ENCODE measurements at regions of chr9 and their contacts with region 1.

Region 1: DNA sequence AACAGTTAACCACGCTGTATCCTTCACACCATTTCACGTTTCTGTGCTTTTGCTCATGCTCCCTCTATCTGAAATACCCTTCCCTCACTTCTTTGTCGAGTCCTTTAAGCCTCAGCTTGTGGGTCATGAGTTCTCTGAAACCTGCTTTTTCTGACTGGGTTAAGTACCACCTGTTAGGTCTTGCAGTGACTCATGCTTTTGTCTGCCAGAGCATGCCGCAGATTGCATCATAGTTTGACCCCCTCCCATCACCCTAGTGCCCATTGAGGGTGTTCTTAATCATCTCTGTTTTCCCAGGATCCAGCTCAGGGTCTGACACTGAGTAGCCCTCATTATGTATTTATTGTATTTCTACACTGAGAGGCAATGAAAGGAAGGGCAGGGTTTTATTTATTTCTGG is 190.2 kb downstream of the ASTN2 start:
- DNase-seq: no peak
- ATAC-seq: no peak
- H3K4me3 ChIP-seq: no peak overlapping the region
- H3K27ac ChIP-seq: no peak overlapping the region
- H3K4me1 ChIP-seq: no peaks in the 10 kb centered on the region
- H3K27me3 ChIP-seq: no peaks in the 10 kb centered on the region
- CTCF ChIP-seq: no peak

Region 2: DNA sequence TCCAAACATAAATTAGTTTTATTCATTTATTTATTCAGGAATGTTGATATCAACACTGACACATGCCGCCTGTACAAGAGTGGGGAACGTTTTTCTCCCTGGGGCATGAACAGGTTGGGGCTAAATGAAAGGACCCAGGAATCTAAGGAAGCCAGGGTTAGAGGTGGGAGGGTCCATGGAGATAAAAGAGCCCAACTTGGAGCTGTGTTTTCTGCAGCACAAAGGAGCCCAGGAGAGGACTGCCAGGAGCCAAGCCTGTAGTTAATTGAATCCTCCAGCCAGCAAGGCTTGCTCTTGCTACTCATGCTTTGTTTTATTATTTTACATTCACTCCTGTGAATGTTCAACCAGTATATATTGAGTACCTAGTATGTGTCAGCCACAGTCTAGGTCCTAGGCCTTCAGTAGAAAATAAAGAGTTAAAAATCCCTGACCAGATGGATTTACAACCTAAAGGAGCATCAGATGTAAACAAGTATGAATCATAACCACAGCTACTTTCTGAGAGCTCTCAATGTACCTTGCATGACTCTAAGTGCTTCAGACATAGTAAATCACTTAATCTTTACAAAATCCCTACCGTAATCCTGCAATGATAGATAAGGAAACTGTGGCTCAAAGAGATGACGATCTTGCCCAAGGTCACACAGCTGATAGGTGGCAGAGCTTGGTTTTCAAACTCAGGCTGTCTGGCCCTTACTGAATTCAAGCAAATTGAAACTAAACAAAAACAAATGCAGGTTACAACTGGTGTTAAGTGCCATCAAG is 120.4 kb after region 1 on chr9:
- CTCF ChIA-PET with region 1: no interaction called
- POLR2A ChIA-PET with region 1: interaction called, 10 read pairs
- in situ Hi-C with region 1: no loop called
- intact Hi-C with region 1: no loop called
- DNase-seq: no peak
- ATAC-seq: no peak
- H3K4me3 ChIP-seq: no peak overlapping the region
- H3K27ac ChIP-seq: no peak overlapping the region
- H3K4me1 ChIP-seq: no peaks in the 10 kb centered on the region
- H3K27me3 ChIP-seq: no peaks in the 10 kb centered on the region
- CTCF ChIP-seq: no peak